ENCODE measurements at regions of chr3 and their contacts with region 1.

Region 1: GRCh38 chr3:158727206-158728060 is 4.8 kb downstream of the RARRES1 start:
- DNase-seq: peak; percentile 80
- H3K4me3 ChIP-seq: no peak overlapping the region
- H3K27ac ChIP-seq: no peak overlapping the region
- H3K4me1 ChIP-seq: peaks cover 39% of the 10 kb centered on the region
- H3K27me3 ChIP-seq: no peaks in the 10 kb centered on the region
- CTCF ChIP-seq: peak; percentile 58 to 72
- POLR2A ChIP-seq: no peak

Region 2: GRCh38 chr3:158418035-158418434 is 309.4 kb before region 1 on chr3:
- CTCF ChIA-PET with region 1: no interaction called
- POLR2A ChIA-PET with region 1: no interaction called
- dilution Hi-C with region 1: no loop called
- intact Hi-C with region 1: no loop called
- DNase-seq: no peak
- H3K4me3 ChIP-seq: no peak overlapping the region
- H3K27ac ChIP-seq: no peak overlapping the region
- H3K4me1 ChIP-seq: no peaks in the 10 kb centered on the region
- H3K27me3 ChIP-seq: no peaks in the 10 kb centered on the region
- CTCF ChIP-seq: no peak
- POLR2A ChIP-seq: no peak

Region 3: GRCh38 chr3:158644345-158644908 is 83.0 kb before region 1 on chr3 and contains the start of gene GFM1:
- CTCF ChIA-PET with region 1: interaction called, 16 read pairs
- POLR2A ChIA-PET with region 1: no interaction called
- dilution Hi-C with region 1: no loop called
- intact Hi-C with region 1: no loop called
- DNase-seq: peak; percentile 97
- H3K4me3 ChIP-seq: peak within 1 kb of the TSS; percentile 41 to 95 (median 74)
- H3K27ac ChIP-seq: peak within 1 kb of the TSS; percentile 60
- H3K4me1 ChIP-seq: peaks cover 17% of the 10 kb centered on the region
- H3K27me3 ChIP-seq: no peaks in the 10 kb centered on the region
- CTCF ChIP-seq: peak; percentile 88 to 93
- POLR2A ChIP-seq: peak; percentile 72
- total RNA-seq, gene GFM1: 60.1 and 68.6 TPM in 2 replicates

Region 4: DNA sequence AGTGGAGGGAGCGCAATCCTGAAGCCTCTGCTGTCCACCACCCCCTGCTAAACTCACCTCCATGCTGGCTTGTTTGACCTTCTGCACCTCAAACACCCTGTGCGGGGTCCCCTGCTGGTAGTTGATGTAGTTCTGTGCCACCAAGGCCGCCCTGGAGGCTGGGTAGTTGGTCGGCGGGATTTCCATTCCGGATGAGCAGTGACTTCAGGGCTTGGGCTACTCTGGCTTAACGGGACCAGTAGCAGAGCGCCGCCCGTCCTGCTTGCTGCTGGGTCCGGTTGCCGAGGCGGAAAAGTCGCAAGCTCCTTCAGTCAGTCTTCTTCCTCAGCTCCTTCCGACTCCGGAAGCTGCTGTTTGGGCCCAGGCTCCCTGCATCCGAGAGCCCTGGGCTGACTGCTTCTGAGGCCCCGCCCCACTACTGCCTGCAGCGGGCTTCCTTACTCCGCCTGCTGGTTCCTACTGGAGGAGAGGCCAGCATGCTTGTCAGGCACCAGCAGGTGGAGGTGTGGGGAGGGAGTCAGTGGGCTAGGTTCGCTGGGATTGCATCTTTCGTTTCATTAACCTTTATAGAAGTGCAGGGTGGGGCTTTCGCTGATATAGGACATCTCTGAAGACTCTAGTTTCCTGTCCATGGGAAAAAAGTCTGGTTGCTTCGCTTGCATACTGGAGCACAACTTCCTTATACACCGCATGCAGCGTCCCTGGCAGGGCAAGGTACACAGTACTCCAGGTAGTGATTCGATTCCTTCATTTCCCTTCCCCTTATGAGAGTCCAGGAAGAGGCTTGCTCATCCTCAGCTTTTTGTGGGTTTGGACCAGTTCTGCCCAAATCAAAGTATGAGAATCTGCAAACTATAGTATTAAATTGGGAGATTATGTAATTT is 54.9 kb before region 1 on chr3 and contains the start of gene LXN:
- CTCF ChIA-PET with region 1: interaction called, 31 read pairs
- POLR2A ChIA-PET with region 1: no interaction called
- dilution Hi-C with region 1: no loop called
- intact Hi-C with region 1: loop called (anchors 1 kb)
- DNase-seq: peak; percentile 92
- H3K4me3 ChIP-seq: peak within 1 kb of the TSS; percentile 39 to 90 (median 79)
- H3K27ac ChIP-seq: peak within 1 kb of the TSS; percentile 75
- H3K4me1 ChIP-seq: peaks cover 29% of the 10 kb centered on the region
- H3K27me3 ChIP-seq: no peaks in the 10 kb centered on the region
- CTCF ChIP-seq: peak; percentile 56 to 92
- POLR2A ChIP-seq: peak; percentile 87
- total RNA-seq, gene LXN: 118 and 119 TPM in 2 replicates

Region 5: GRCh38 chr3:158702815-158703481 is 24.5 kb before region 1 on chr3:
- CTCF ChIA-PET with region 1: interaction called, 36 read pairs
- POLR2A ChIA-PET with region 1: interaction called, 3 read pairs
- dilution Hi-C with region 1: no loop called
- intact Hi-C with region 1: loop called (anchors 1 kb)
- DNase-seq: peak; percentile 89
- H3K4me3 ChIP-seq: peak overlapping the region in 1 of 3 experiments; percentile 23
- H3K27ac ChIP-seq: peak overlapping the region; percentile 80
- H3K4me1 ChIP-seq: peaks cover 52% of the 10 kb centered on the region
- H3K27me3 ChIP-seq: no peaks in the 10 kb centered on the region
- CTCF ChIP-seq: no peak
- POLR2A ChIP-seq: peak; percentile 50

Region 6: DNA sequence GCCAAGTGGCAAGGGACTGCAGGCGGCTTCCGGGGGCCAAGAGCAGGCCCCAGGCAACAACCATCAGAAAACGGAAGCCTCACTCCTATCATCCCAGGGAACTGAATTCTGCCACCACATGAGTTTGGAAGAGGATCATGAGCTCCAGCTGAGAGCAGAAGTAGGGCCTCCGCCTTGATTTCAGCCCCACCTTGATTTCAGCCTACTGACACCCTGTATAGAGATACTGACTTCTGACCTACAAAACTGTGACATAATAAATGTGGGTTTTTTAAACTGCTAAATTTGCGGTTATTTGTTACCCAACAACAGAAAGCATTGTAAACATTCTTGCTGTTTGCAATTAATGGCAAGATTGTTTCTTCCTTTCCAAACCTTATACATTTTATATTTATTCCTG is 26.4 kb after region 1 on chr3:
- CTCF ChIA-PET with region 1: interaction called, 11 read pairs
- POLR2A ChIA-PET with region 1: no interaction called
- dilution Hi-C with region 1: no loop called
- intact Hi-C with region 1: no loop called
- DNase-seq: no peak
- H3K4me3 ChIP-seq: no peak overlapping the region
- H3K27ac ChIP-seq: no peak overlapping the region
- H3K4me1 ChIP-seq: no peaks in the 10 kb centered on the region
- H3K27me3 ChIP-seq: no peaks in the 10 kb centered on the region
- CTCF ChIP-seq: no peak
- POLR2A ChIP-seq: no peak

Region 7: GRCh38 chr3:158790901-158791589 is 63.6 kb after region 1 on chr3:
- CTCF ChIA-PET with region 1: interaction called, 131 read pairs
- POLR2A ChIA-PET with region 1: no interaction called
- dilution Hi-C with region 1: no loop called
- intact Hi-C with region 1: loop called (anchors 1 kb)
- DNase-seq: peak; percentile 71
- H3K4me3 ChIP-seq: peak overlapping the region in 1 of 3 experiments; percentile 3
- H3K27ac ChIP-seq: no peak overlapping the region
- H3K4me1 ChIP-seq: peaks cover 8% of the 10 kb centered on the region
- H3K27me3 ChIP-seq: no peaks in the 10 kb centered on the region
- CTCF ChIP-seq: peak; percentile 67 to 72
- POLR2A ChIP-seq: no peak